ENCODE measurements at regions of chr3 and their contacts with region 1.

Region 1: DNA sequence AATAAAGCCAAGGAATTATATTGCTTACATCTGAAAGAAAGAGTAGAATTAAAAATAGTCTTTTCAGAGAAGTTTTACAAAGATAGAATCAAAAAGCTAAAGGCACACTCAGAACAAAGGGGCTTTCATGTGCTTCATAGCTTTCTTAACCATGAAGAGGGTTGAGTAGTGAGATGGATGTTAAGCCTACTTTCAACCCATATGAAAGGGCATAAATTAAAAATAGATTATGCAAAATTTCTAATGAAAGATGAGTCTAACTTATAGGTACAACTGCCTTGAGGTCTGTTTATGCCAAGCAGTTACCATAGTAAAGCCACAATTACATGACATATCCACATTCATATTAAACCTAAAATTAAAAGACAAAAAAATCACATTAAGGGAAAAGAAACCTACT is 223.3 kb upstream of the ARHGEF26 start:
- DNase-seq: no peak
- ATAC-seq: no peak
- H3K4me3 ChIP-seq: no peak overlapping the region
- H3K27ac ChIP-seq: no peak overlapping the region
- H3K4me1 ChIP-seq: peaks cover 34% of the 10 kb centered on the region
- H3K27me3 ChIP-seq: no peaks in the 10 kb centered on the region
- CTCF ChIP-seq: no peak

Region 2: GRCh38 chr3:153379516-153379915 is 518.3 kb before region 1 on chr3:
- CTCF ChIA-PET with region 1: no interaction called
- POLR2A ChIA-PET with region 1: no interaction called
- intact Hi-C with region 1: loop called (anchors 5 kb)
- DNase-seq: peak; percentile 12
- ATAC-seq: no peak
- H3K4me3 ChIP-seq: no peak overlapping the region
- H3K27ac ChIP-seq: no peak overlapping the region
- H3K4me1 ChIP-seq: no peaks in the 10 kb centered on the region
- H3K27me3 ChIP-seq: no peaks in the 10 kb centered on the region
- CTCF ChIP-seq: no peak

Region 3: DNA sequence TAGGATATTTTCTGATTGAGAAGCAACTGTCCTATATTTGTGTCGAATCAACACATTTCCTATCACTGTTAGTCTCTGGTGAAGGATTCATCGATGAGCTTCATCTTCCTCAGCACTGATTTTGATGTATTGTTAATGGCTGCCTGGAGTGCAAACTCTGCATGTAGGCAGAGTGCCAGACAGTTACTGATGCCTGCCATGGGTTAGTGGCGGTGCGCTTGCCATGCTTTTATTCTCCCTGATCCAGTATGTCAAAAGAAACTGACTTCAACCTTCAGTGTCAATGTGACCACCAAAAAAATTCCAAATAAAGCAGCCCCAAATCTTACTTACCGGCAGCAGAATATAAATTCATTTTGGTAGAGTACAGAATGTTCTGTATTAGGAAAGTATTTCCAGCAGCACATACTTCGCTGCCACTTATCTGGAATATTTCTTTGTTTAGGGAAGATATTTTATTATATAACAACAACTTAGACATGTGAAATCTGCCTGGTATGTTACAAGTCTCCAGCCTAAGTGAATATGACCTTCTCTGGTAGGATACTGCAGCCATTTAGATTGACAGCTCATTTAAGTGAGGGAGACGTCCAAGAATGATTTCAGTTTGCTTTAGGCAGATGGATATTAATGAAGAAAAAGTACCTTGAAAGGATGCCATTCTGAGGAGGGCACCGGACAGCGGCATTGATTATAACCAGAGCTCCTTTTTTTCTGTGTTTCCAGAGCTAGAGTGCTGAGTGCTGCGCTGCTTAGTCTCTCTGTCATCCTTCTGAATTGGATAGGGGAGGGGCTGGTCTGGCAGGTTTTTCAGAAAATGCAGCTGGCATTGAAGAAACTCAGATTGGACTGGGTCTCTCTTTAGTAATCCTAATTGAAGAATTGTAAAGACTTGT is 283.2 kb after region 1 on chr3:
- CTCF ChIA-PET with region 1: no interaction called
- POLR2A ChIA-PET with region 1: no interaction called
- intact Hi-C with region 1: no loop called
- DNase-seq: peak; percentile 25
- ATAC-seq: no peak
- H3K4me3 ChIP-seq: no peak overlapping the region
- H3K27ac ChIP-seq: no peak overlapping the region
- H3K4me1 ChIP-seq: no peaks in the 10 kb centered on the region
- H3K27me3 ChIP-seq: no peaks in the 10 kb centered on the region
- CTCF ChIP-seq: no peak